K562 (cell line): ENCODE measurements at regions of chr7 and their contacts with region 1.

Region 1: GRCh38 chr7:156764016-156764669 is 123.6 kb downstream of the RNF32 start:
- DNase-seq: peak; percentile 68 to 87 (median 76)
- ATAC-seq: peak; percentile 100
- H3K4me3 ChIP-seq: no peak overlapping the region
- H3K27ac ChIP-seq: no peak overlapping the region
- H3K4me1 ChIP-seq: peaks cover 0 to 5% of the 10 kb centered on the region in 2 experiments; a peak in 3 of 5 replicates
- H3K27me3 ChIP-seq: no peaks in the 10 kb centered on the region
- CTCF ChIP-seq: peak; percentile 82 to 88 (median 82)
- EP300 ChIP-seq: peak; percentile 27; the same call in 1 of the 2 replicates
- POLR2A ChIP-seq: no peak
- RAD21 ChIP-seq: peak; percentile 73 to 83

Region 2: DNA sequence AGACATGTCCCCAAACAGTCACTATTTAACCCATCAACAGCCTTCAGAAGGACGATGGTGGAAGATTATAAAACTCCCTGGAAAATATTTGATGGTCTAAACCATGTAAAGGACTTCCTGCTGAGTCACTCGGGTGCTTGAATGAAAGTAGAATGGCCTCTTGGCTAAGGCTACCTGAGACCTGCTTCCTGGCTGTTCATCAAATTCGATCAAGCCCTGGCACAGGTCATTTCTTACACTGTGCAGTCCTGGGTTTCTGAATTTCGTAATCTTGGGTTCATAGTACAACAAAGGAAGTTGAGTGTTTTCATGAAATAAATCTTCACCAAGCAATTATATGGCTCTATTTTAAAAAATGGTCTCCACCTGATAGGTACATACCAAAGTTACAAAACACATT is 383.9 kb before region 1 on chr7:
- CTCF ChIA-PET with region 1: no interaction called
- POLR2A ChIA-PET with region 1: no interaction called
- in situ Hi-C with region 1: no loop called
- intact Hi-C with region 1: no loop called
- DNase-seq: no peak
- ATAC-seq: no peak
- H3K4me3 ChIP-seq: no peak overlapping the region
- H3K27ac ChIP-seq: no peak overlapping the region
- H3K4me1 ChIP-seq: no peaks in the 10 kb centered on the region
- H3K27me3 ChIP-seq: peaks cover 50 to 73% of the 10 kb centered on the region in 2 experiments
- CTCF ChIP-seq: no peak
- EP300 ChIP-seq: no peak
- POLR2A ChIP-seq: no peak
- RAD21 ChIP-seq: no peak

Region 3: GRCh38 chr7:156487811-156488533 is 276.2 kb before region 1 on chr7:
- CTCF ChIA-PET with region 1: no interaction called
- POLR2A ChIA-PET with region 1: no interaction called
- in situ Hi-C with region 1: no loop called
- intact Hi-C with region 1: no loop called
- DNase-seq: no peak
- ATAC-seq: no peak
- H3K4me3 ChIP-seq: no peak overlapping the region
- H3K27ac ChIP-seq: no peak overlapping the region
- H3K4me1 ChIP-seq: peaks cover 0 to 2% of the 10 kb centered on the region in 2 experiments; a peak in 1 of 5 replicates
- H3K27me3 ChIP-seq: peaks cover 22 to 40% of the 10 kb centered on the region in 2 experiments; a peak in 4 of 5 replicates
- CTCF ChIP-seq: no peak
- EP300 ChIP-seq: no peak
- POLR2A ChIP-seq: no peak
- RAD21 ChIP-seq: no peak

Region 4: DNA sequence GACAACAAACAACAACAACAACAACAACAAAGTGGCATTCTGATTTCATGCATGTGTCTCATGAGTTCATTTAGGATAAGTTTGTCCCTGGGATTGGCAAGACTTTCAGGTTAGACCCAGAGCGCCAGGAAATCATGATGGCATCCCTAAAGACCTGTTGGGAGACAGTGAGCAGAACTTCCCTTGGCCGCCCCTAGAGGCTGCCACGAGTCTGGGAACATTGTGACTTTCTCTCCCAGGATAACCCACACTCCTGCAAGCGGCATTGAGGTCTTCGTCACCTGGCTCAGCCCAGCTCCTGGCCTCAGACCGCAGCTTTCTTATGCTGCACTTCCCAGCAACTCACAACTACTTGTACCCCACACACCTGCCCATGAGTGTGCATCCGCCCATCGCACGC is 204.1 kb before region 1 on chr7:
- CTCF ChIA-PET with region 1: interaction called, 3 read pairs
- POLR2A ChIA-PET with region 1: no interaction called
- in situ Hi-C with region 1: no loop called
- intact Hi-C with region 1: loop called (anchors 5 kb)
- DNase-seq: peak in 2 of 4 experiments; percentile 59 to 61
- ATAC-seq: peak; percentile 97
- H3K4me3 ChIP-seq: no peak overlapping the region
- H3K27ac ChIP-seq: no peak overlapping the region
- H3K4me1 ChIP-seq: no peaks in the 10 kb centered on the region
- H3K27me3 ChIP-seq: peaks cover 7 to 23% of the 10 kb centered on the region in 2 experiments; a peak in 4 of 5 replicates
- CTCF ChIP-seq: peak; percentile 71 to 79 (median 78)
- EP300 ChIP-seq: no peak
- POLR2A ChIP-seq: no peak
- RAD21 ChIP-seq: peak in 1 of 2 experiments; percentile 67; a peak in 2 of 4 replicates

Region 5: DNA sequence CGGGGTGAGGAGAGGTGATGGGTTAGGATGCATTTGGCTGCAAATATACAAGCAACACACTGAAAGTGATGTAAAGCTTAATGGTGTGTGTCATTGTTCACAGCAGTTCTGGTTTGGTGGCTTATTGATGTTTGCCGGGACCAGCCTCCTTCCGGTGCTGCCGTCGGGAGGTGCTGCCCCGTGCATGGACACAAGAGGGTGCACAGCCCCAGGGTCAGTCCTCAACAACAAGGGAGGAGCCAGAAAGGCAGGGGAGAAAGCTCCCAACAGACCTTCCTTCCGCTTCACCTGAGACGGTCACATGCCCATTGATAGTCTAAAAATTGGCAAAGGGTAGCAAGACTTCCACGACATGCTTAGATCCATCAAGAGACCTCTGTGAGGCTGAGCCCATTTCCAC is 114.1 kb before region 1 on chr7:
- CTCF ChIA-PET with region 1: interaction called, 3 read pairs
- POLR2A ChIA-PET with region 1: no interaction called
- in situ Hi-C with region 1: no loop called
- intact Hi-C with region 1: loop called (anchors 1 kb)
- DNase-seq: peak; percentile 73 to 79 (median 75)
- ATAC-seq: peak; percentile 98
- H3K4me3 ChIP-seq: no peak overlapping the region
- H3K27ac ChIP-seq: no peak overlapping the region
- H3K4me1 ChIP-seq: peaks cover 0 to 3% of the 10 kb centered on the region in 2 experiments; a peak in 1 of 5 replicates
- H3K27me3 ChIP-seq: no peaks in the 10 kb centered on the region
- CTCF ChIP-seq: peak; percentile 84 to 91 (median 88)
- EP300 ChIP-seq: no peak
- POLR2A ChIP-seq: no peak
- RAD21 ChIP-seq: peak in 1 of 2 experiments; percentile 74; a peak in 3 of 4 replicates

Region 6: DNA sequence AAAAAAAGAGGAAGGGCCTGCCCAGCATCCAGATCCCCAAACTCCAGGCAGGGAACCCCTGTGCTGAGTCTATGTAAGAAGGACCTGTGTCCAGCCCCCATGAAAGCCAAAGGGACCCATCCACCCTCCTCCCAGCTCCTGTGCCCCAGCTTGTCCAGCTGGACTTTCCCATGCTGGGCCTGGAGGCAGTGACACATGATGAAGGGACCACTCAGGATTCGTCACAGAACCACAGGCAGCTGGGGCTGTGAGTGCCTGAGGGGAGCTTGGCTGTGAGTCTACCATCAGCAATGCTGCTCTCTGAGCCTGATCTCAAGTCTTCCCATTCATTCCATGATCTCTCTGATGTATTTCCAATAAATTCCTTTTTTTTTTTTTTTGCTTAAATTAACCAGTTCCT is 282.5 kb after region 1 on chr7:
- CTCF ChIA-PET with region 1: no interaction called
- POLR2A ChIA-PET with region 1: no interaction called
- in situ Hi-C with region 1: no loop called
- intact Hi-C with region 1: no loop called
- DNase-seq: peak in 1 of 4 experiments; percentile 12
- ATAC-seq: no peak
- H3K4me3 ChIP-seq: no peak overlapping the region
- H3K27ac ChIP-seq: no peak overlapping the region
- H3K4me1 ChIP-seq: peaks cover 1 to 12% of the 10 kb centered on the region in 2 experiments; a peak in 3 of 5 replicates
- H3K27me3 ChIP-seq: peaks cover 74 to 84% of the 10 kb centered on the region in 2 experiments
- CTCF ChIP-seq: no peak
- EP300 ChIP-seq: no peak
- POLR2A ChIP-seq: no peak
- RAD21 ChIP-seq: no peak